ENCODE measurements at regions of chr14 and their contacts with region 1.

Region 1: DNA sequence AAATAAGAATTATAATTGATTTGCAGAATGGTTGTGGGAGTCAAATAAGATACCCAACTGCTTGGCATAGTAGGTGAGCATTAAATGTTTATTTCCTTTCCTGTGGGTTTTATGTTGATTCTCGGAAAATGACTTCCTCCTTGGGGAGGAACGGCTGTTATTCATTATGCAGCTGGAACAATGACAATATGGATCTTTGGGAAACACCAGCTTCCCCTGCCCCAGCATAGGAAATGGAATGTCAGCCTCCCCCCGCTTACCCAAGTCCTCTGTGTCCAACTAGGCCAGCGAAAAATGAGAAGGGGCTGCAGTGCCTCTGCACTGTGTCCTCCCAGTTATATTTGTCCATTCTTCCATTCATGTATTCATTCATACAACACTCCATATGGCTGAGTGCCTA is 11.7 kb upstream of the CCDC177 start:
- DNase-seq: peak in 1 of 5 donors; percentile 40
- H3K4me3 ChIP-seq: no peak overlapping the region
- H3K27ac ChIP-seq: no peak overlapping the region
- H3K4me1 ChIP-seq: no peaks in the 10 kb centered on the region
- H3K27me3 ChIP-seq: no peaks in the 10 kb centered on the region
- CTCF ChIP-seq: no peak

Region 2: DNA sequence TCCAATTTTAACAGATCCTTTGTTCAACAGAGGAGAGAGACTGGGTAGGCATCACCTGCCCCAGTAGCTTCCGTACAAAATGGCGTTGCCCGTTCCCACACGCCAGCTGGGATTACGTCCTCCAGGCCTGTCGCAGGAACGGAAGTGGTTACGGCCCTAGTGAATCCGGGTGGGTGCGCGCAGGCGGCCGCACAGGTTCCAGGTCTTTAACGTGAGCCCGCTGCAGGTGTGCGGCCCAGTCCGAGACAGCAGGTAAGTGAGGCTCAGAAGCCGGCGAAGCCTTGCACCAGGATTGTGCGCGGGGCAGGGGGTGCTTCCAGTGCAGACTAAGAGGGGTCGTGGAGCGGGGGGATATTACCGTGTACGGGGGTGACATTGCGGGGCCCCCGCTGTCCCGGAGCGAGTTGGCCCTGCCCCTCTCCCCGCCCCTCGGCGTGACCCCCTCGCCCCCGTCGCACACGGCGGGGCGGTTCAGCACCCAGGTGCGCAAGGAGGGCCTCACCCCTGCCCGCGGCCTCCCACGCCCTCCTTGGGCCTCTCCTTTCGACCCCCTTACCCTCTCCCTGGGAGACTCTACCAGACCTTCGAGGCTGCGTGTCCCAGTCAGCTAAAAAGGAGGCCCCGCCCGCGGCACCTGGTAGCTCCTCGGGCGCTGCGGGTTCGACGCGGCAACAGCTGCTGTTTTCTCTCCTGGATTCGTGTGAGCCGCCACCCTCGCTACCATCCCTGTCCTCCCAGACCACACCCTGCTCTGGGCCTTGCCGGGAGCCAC is 394.9 kb before region 1 on chr14 and contains the start of gene EXD2:
- intact Hi-C with region 1: no loop called
- DNase-seq: peak; percentile 94 to 97 (median 95)
- H3K4me3 ChIP-seq: peak within 1 kb of the TSS; percentile 72 to 90 (median 80)
- H3K27ac ChIP-seq: peak within 1 kb of the TSS; percentile 74 to 78
- H3K4me1 ChIP-seq: peaks cover 0 to 2% (median 0%) of the 10 kb centered on the region in 3 donors
- H3K27me3 ChIP-seq: no peaks in the 10 kb centered on the region
- CTCF ChIP-seq: no peak
- total RNA-seq, gene EXD2: 24.5 TPM

Region 3: GRCh38 chr14:69726761-69727511 is 140.5 kb after region 1 on chr14:
- intact Hi-C with region 1: loop called (anchors 5 kb)
- DNase-seq: peak; percentile 85 to 93 (median 89)
- H3K4me3 ChIP-seq: peak overlapping the region; percentile 53 to 67 (median 56)
- H3K27ac ChIP-seq: peak overlapping the region; percentile 40 to 69
- H3K4me1 ChIP-seq: peaks cover 0 to 7% (median 6%) of the 10 kb centered on the region in 3 donors
- H3K27me3 ChIP-seq: no peaks in the 10 kb centered on the region
- CTCF ChIP-seq: peak; percentile 94

Measured in kidney (tissue), 22 donors.